ENCODE measurements at regions of chr2 and their contacts with region 1.

Region 1: DNA sequence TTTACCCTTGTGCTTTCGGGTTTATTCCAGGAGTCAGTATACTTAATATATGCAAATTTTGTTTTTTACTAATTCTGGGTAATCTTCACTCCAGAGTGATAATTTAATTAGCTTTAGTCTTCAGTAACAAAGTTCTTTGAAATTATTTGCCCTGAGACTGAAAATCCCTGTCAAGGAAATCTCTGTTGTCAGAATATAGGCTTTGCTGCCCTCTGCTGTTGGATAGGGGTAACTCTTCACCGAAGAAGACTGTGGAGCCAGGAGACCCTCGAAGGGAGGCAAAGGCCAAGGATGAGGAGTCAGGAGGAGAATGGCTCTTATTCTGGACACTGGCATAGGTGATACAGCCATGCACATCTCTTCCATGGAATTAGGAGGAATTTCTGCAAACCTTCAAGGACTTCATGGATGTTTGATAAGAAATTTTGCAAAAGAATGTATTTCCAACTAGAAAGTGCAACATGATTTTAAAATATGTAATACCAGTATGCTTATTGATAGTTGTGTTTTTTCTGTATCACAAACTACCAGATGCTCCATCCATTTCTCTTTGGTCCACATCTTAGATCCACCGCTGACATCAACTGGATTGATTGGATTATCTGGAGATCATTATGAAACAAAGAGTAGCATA is 182.3 kb downstream of the RDH14 start:
- DNase-seq: no peak
- H3K4me3 ChIP-seq: no peak overlapping the region
- H3K27ac ChIP-seq: no peak overlapping the region
- H3K4me1 ChIP-seq: no peaks in the 10 kb centered on the region
- H3K27me3 ChIP-seq: peaks cover 0 to 5% (median 0%) of the 10 kb centered on the region in 4 donors
- CTCF ChIP-seq: peak; percentile 72 to 88 (median 79)
- EP300 ChIP-seq: no peak
- POLR2A ChIP-seq: no peak

Region 2: GRCh38 chr2:17719562-17720371 is 658.4 kb before region 1 on chr2:
- intact Hi-C with region 1: loop called (anchors 5 kb)
- DNase-seq: no peak
- H3K4me3 ChIP-seq: no peak overlapping the region
- H3K27ac ChIP-seq: no peak overlapping the region
- H3K4me1 ChIP-seq: no peaks in the 10 kb centered on the region
- H3K27me3 ChIP-seq: no peaks in the 10 kb centered on the region
- CTCF ChIP-seq: peak; percentile 66 to 83 (median 76)
- EP300 ChIP-seq: no peak
- POLR2A ChIP-seq: no peak

Region 3: DNA sequence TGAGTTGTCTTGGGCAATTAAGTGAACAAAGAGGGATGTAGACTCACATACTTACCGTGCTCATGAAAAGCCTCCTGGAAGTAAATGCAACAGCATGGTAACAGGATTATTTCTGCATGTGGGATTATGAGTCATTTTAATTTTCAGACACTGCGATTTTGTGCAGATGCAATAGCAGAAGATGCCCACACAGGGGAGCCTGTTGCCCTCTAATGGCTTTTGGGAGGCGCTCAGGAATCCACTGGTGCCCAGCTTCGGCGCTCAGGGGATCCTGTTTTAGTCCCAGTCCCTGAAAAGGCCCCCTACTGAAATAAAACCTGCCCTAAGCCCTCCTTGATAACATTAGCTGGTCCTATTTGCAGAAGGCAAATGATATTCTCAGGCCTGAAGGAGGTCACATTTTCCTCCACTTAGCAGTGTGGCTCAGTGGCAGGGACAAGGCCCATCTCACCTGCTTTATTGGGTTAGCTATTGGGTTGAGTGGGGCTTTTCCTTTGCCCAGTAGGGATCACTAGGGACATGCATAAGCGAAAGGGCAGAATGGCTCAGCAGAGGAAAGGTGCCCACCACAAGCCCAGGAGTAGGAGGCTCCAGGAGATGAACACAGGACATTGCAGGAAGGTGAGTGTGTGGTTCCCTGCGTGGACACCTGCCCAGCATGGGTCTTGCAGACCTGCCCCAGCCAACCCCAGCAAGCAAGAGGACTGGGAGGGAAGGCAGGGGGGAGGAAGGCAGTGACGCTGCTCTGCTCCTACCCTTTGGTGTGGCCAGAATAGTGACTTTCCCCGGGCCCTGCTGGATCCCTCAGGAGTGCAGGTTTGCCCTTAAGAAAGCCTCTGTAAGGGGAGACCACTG is 526.2 kb before region 1 on chr2:
- intact Hi-C with region 1: loop called (anchors 5 kb)
- DNase-seq: no peak
- H3K4me3 ChIP-seq: no peak overlapping the region
- H3K27ac ChIP-seq: no peak overlapping the region
- H3K4me1 ChIP-seq: peaks cover 0 to 4% (median 0%) of the 10 kb centered on the region in 4 donors
- H3K27me3 ChIP-seq: no peaks in the 10 kb centered on the region
- CTCF ChIP-seq: peak; percentile 88 to 96 (median 89)
- EP300 ChIP-seq: no peak
- POLR2A ChIP-seq: no peak

Region 4: GRCh38 chr2:18178736-18179349 is 199.3 kb before region 1 on chr2:
- intact Hi-C with region 1: loop called (anchors 10 kb)
- DNase-seq: no peak
- H3K4me3 ChIP-seq: no peak overlapping the region
- H3K27ac ChIP-seq: no peak overlapping the region
- H3K4me1 ChIP-seq: no peaks in the 10 kb centered on the region
- H3K27me3 ChIP-seq: no peaks in the 10 kb centered on the region
- CTCF ChIP-seq: peak; percentile 78 to 87 (median 80)
- EP300 ChIP-seq: no peak
- POLR2A ChIP-seq: no peak